CD4-positive, alpha-beta memory T cell (primary cell): ENCODE measurements at regions of chr2 and their contacts with region 1.

Region 1: DNA sequence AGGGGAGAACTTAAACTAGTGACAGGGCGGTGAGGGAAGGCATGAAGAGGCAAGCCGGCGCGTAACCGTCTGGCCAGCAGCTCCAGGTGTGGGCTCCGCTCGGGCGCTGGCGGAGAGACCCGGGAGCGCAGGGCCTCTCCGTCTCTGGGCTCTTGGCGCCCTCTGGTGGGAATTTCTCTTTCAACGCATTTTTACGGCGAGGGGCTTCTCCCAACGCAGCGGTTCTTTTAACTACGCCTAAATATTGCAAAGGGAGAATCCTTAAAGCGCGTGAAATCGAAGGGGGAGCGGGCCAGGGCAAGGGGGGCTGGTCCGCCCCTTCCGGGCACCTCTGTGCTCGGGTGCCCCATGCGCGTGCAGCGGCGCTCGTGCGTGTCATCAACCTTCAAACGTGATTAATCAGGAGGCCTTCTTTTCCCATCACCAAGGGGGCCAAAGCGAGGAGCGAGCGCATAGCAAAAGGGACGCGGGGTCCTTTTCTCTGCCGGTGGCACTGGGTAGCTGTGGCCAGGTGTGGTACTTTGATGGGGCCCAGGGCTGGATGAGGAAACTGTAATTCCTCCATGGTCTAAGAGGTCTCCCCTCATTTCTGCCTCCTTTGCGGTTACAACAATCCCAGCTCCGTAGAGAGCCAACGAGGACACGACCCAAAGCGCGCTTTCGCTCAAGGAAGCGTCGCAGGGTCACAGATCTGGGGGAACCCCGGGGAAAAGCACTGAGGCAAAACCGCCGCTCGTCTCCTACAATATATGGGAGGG is 762 bp upstream of the GAD1 start:
- DNase-seq: peak in 4 of 5 donors; percentile 55 to 67 (median 64)
- H3K4me3 ChIP-seq: peak overlapping the region; percentile 39 to 44
- H3K4me3 Mint-ChIP-seq: peak overlapping the region; percentile 61 to 89 (median 76)
- H3K27ac ChIP-seq: no peak overlapping the region
- H3K27ac Mint-ChIP-seq: peak overlapping the region in 3 of 7 donors; percentile 80 to 87 (median 86)
- H3K4me1 ChIP-seq: peaks cover 55% of the 10 kb centered on the region
- H3K4me1 Mint-ChIP-seq: peaks cover 29 to 71% (median 50%) of the 10 kb centered on the region in 4 donors
- H3K27me3 ChIP-seq: peaks cover 64% of the 10 kb centered on the region
- H3K27me3 Mint-ChIP-seq: peaks cover 56 to 69% of the 10 kb centered on the region in 2 donors

Region 2: DNA sequence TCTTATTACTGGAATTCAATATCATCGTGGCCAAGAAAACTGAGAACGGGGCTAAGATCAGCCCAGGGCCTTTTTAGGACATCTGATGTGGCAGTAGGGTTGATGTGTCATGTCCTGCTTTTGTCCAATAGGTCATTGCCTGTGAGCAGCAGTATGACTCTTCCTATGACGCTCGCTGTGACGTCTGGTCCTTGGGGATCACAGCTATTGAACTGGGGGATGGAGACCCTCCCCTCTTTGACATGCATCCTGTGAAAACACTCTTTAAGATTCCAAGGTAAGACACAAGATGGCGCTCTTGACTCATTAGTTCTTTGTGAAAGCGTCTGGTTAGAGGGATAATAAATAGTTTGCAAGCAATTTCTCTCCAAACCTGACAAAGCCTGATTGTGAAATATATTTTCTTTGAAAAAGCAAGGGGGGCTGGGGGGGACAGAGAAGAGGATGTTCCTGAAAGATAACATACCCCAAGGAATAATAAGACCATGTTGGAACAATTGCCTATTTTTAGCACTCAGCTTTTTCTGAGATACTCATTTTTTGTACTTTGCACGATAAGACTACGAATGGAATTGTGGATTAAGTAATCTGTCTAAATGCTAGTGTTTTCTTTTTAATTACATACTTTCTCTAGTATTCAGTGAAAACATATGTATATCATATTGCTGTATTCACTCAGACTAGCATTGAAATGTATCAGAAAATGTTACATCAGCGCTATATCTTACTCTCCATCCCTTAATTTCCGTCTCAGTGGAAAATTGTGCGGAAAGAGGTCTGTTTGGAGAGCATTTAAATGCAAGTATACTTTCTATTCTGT is 579.9 kb before region 1 on chr2:
- CTCF ChIA-PET with region 1: no interaction called
- POLR2A ChIA-PET with region 1: no interaction called
- intact Hi-C with region 1: loop called (anchors 5 kb)
- DNase-seq: peak in 1 of 5 donors; percentile 5
- H3K4me3 ChIP-seq: no peak overlapping the region
- H3K4me3 Mint-ChIP-seq: no peak overlapping the region
- H3K27ac ChIP-seq: no peak overlapping the region
- H3K27ac Mint-ChIP-seq: no peak overlapping the region
- H3K4me1 ChIP-seq: no peaks in the 10 kb centered on the region
- H3K4me1 Mint-ChIP-seq: no peaks in the 10 kb centered on the region
- H3K27me3 ChIP-seq: no peaks in the 10 kb centered on the region
- H3K27me3 Mint-ChIP-seq: peaks cover 9 to 10% of the 10 kb centered on the region in 2 donors

Region 3: DNA sequence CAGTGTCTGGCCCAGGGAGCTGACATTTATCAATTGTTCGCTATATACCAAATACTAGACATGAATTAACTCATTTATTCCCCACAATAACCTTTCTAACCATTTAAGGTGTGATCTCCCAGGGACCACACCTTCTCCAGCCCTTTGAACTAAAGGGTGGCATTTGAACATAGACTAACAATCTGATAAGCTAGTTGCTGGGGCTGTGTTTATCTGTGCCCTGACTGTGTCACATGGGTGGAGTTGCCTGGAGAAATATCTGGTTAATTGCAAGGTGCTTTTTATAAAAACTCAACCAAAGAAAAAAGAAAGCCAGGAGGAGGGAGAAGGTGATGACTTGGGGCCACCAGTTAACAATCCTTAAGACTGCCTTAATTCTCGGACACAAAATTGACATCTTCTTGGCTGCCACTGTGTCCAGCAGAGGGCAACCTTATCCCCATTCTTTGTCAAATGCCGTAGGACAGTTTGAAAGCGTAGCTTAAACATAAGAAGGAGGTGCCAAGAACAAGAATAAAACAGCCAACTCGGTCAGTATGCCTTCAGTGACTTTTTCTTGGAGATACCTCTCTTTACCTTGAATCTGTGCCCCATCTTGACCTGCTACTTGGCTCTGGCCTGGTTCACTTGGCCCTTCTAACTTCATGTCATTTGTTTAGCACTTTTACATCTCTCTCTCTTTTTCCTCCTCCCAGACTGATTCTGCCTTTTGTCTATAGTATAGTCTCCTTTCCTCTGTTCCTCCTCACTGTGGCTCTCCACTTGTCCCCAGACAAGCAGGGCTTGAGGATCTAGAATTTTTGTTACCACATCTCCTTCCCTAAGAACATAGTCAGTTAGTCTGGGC is 454.6 kb before region 1 on chr2:
- CTCF ChIA-PET with region 1: interaction called, 29 read pairs
- POLR2A ChIA-PET with region 1: no interaction called
- intact Hi-C with region 1: loop called (anchors 1 kb)
- DNase-seq: peak in 4 of 5 donors; percentile 34 to 46 (median 42)
- H3K4me3 ChIP-seq: no peak overlapping the region
- H3K4me3 Mint-ChIP-seq: no peak overlapping the region
- H3K27ac ChIP-seq: no peak overlapping the region
- H3K27ac Mint-ChIP-seq: no peak overlapping the region
- H3K4me1 ChIP-seq: peaks cover 4% of the 10 kb centered on the region
- H3K4me1 Mint-ChIP-seq: peaks cover 4 to 12% (median 8%) of the 10 kb centered on the region in 4 donors
- H3K27me3 ChIP-seq: peaks cover 3% of the 10 kb centered on the region
- H3K27me3 Mint-ChIP-seq: peaks cover 13 to 23% of the 10 kb centered on the region in 2 donors

Region 4: GRCh38 chr2:170396799-170397459 is 419.0 kb before region 1 on chr2:
- CTCF ChIA-PET with region 1: interaction called, 33 read pairs
- POLR2A ChIA-PET with region 1: no interaction called
- intact Hi-C with region 1: loop called (anchors 1 kb)
- DNase-seq: no peak
- H3K4me3 ChIP-seq: no peak overlapping the region
- H3K4me3 Mint-ChIP-seq: no peak overlapping the region
- H3K27ac ChIP-seq: no peak overlapping the region
- H3K27ac Mint-ChIP-seq: no peak overlapping the region
- H3K4me1 ChIP-seq: no peaks in the 10 kb centered on the region
- H3K4me1 Mint-ChIP-seq: no peaks in the 10 kb centered on the region
- H3K27me3 ChIP-seq: no peaks in the 10 kb centered on the region
- H3K27me3 Mint-ChIP-seq: peaks cover 29 to 31% of the 10 kb centered on the region in 2 donors

Region 5: GRCh38 chr2:170486730-170487129 is 329.2 kb before region 1 on chr2:
- CTCF ChIA-PET with region 1: interaction called, 6 read pairs
- POLR2A ChIA-PET with region 1: no interaction called
- intact Hi-C with region 1: loop called (anchors 1 kb)
- DNase-seq: peak in 1 of 5 donors; percentile 6
- H3K4me3 ChIP-seq: no peak overlapping the region
- H3K4me3 Mint-ChIP-seq: no peak overlapping the region
- H3K27ac ChIP-seq: no peak overlapping the region
- H3K27ac Mint-ChIP-seq: no peak overlapping the region
- H3K4me1 ChIP-seq: no peaks in the 10 kb centered on the region
- H3K4me1 Mint-ChIP-seq: no peaks in the 10 kb centered on the region
- H3K27me3 ChIP-seq: no peaks in the 10 kb centered on the region
- H3K27me3 Mint-ChIP-seq: peaks cover 3 to 4% of the 10 kb centered on the region in 2 donors

Region 6: DNA sequence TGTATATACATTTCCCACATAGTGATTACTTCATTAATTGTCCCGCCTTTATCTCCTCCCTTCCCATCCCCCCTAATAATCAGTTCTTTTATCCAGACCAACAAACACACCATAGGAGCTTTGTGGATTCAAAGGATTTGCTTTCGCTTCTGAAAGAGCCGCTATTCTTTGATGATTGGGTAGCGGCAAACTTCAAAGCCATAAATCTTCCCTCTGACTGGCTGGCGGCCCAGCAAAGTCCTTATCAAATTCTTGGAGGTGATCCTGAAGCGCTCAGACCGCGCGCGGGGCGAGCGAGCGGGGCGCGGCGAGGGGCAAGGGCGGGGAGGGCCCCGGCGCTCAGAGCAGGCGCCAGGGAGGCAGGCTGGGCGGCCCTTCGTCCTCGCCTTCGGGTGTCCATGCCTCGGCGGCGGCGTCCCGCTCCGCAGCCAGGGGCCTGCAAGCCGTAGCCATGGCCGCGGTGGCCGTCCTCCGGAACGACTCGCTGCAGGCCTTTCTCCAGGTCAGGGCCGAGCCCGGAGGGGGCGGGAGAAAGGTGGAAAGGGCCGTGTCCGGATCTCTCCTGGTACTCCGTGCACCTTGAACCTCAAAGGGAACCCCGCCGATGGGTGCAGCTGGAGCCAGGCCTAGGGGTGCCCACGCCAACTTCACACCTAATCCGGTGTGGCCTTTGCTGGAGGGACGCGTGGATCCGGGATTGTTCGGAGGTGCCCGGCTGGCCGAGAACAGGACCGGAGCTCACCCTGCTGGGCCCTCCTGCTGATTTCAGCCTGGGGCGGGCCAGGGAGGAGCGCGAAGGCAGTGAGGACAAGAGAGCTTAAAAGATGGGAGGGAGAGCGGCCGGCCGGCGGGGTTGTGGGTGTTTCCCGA is 100.6 kb before region 1 on chr2 and contains the start of gene SP5:
- CTCF ChIA-PET with region 1: no interaction called
- POLR2A ChIA-PET with region 1: no interaction called
- intact Hi-C with region 1: loop called (anchors 5 kb)
- DNase-seq: peak; percentile 45 to 65 (median 56)
- H3K4me3 ChIP-seq: peak within 1 kb of the TSS; percentile 44 to 69
- H3K4me3 Mint-ChIP-seq: peak within 1 kb of the TSS; percentile 84 to 95 (median 93)
- H3K27ac ChIP-seq: no peak within 1 kb of the TSS
- H3K27ac Mint-ChIP-seq: peak within 1 kb of the TSS in 4 of 7 donors; percentile 26 to 87 (median 54)
- H3K4me1 ChIP-seq: peaks cover 40% of the 10 kb centered on the region
- H3K4me1 Mint-ChIP-seq: peaks cover 17 to 45% (median 36%) of the 10 kb centered on the region in 4 donors
- H3K27me3 ChIP-seq: peaks cover 45% of the 10 kb centered on the region
- H3K27me3 Mint-ChIP-seq: peaks cover 47 to 52% of the 10 kb centered on the region in 2 donors
- total RNA-seq, gene SP5: not detected